Activated CD4-positive, alpha-beta T cell treated with anti-CD3 and anti-CD28 coated beads, Interleukin-2, amount 10 ng/mL, durations not matched to agents 24 days and 14 days (primary cell): ENCODE measurements at regions of chr20 and their contacts with region 1.

Region 1: DNA sequence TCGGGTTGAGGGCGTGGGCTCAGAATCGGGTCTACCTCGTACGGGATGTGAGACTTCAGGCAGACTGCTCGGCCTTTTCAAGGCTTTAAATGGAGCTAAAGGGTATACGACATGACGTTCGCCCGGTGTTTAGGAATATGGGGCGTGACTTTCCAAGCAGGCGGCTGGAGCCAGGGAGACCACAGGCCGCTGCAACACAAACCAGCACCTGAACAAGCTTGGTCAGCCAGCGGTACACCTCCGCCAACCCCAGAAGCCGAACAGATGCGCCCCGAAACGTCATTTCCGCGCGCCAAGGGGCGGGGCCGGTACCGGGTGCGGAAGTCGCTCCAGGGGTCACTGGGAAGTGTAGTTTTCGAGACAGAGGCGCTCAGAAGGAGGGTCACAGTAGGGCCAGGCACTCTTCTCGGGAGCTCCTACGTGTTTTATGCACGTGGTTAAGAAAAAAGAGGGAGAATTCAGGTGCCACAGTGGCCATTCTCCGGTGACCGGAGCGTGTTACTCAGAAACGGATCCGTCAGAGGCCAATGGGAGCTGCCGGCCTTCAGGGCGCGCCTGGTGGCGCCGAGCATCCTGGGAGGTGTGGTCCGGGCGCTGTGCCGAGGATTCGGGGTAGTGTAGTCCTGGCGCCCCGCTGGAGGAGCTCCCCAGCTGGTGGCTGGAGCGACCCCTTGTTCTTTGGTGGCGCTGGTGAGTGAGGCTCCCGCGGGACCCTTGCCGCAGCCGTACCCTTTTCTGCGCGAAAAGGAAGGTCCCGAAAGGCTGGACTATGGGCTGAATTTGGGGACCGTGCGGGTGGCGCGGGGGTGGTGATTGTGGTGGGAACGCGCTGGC is at the start of gene ZNF133:
- DNase-seq: peak; percentile 99
- H3K4me3 Mint-ChIP-seq: peak within 1 kb of the TSS; percentile 99
- H3K27ac Mint-ChIP-seq: peak within 1 kb of the TSS; percentile 99
- H3K4me1 Mint-ChIP-seq: peaks cover 22% of the 10 kb centered on the region
- H3K27me3 Mint-ChIP-seq: peaks cover 17% of the 10 kb centered on the region
- total RNA-seq, gene ZNF133: 10.2 and 10.5 TPM in 2 replicates

Region 2: DNA sequence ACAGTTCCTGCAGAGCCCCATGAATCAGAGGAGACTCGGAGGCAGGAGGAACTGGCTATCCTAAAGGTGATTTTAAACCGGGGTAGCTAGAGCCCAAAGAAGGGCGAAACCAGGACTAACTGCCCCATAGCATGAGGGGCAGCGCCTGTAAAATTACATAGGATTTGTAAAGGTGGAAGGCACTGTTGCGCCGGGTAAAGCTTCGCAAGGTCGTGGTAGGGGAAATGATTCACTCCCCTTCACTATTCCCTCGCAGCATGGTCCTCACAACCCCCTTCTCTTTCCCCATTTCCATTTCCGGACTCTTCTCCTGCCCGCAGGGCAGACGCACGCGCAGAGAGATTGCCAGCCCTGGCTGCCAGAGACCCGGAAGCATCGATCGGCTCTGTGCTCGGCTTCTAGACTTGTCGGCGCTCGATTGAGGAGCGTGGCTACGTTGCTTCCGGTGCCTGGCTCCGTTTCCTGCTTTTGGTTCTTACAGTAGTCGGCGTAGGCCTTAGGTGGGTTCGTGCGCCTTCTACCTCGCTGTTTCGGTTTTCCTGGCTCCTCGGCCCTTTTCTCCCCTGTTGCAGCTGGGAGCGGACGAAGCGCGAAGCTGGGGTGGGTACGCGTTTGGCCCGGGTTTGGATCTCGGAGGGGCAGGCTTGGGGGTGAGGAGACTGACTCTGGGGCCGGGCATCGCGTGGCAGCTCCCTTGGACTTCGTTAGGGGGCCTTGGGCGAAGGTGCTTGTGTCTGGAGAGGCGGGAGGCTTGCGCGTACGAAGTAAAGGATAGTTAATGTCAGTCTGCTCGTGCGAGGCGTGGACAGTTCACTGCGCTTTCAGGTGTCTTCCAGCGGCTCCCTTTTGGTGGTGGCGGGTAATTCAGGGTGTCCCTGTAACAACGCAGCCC is 1558.3 kb before region 1 on chr20 and contains the start of gene SNRPB2:
- intact Hi-C with region 1: loop called (anchors 2 kb)
- DNase-seq: peak; percentile 97
- H3K4me3 Mint-ChIP-seq: peak within 1 kb of the TSS; percentile 100
- H3K27ac Mint-ChIP-seq: peak within 1 kb of the TSS; percentile 100
- H3K4me1 Mint-ChIP-seq: peaks cover 49% of the 10 kb centered on the region
- H3K27me3 Mint-ChIP-seq: peaks cover 16% of the 10 kb centered on the region
- total RNA-seq, gene SNRPB2: 132 and 134 TPM in 2 replicates

Region 3: DNA sequence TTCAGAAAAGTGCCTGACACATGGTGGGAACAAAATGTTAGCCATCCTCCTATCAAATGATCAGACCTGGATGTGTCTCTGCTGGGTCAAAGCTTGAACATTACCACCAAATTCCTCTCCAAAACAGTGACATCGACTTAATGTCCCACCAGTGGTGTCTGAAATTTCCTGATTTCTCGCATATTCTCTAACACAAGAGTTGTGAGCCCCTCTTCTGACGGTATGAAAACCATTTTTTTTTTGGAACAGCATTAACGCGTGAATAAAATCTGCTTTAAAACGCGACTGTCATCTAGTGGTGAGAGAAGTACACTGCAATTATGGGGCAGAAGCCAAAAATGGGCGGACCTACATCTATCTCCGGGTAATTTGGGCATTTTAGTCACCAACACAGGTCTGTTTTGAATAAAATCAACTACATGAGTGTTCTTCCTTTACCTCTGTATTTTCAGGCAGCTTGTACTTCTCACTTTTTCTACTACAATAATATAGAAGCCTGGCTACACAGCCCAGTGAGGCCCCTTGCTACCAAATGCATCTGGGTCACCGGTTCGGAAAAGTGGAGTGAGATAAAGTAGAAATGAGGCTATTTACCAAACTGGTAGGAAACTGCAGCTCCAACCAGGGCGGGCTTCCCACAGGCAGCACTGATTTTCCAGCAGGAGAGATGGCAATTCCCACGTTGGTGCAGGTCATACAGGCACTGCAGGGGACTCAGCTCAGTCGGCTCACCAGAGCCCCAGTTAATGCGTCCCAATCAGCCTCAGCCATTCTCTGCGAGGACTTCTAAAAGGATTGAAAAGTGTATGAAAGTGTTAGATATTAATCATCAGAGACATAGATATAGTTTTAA is 291.9 kb before region 1 on chr20:
- intact Hi-C with region 1: loop called (anchors 5 kb)
- DNase-seq: peak; percentile 87
- H3K4me3 Mint-ChIP-seq: no peak overlapping the region
- H3K27ac Mint-ChIP-seq: no peak overlapping the region
- H3K4me1 Mint-ChIP-seq: peaks cover 38% of the 10 kb centered on the region
- H3K27me3 Mint-ChIP-seq: peaks cover 3% of the 10 kb centered on the region

Region 4: DNA sequence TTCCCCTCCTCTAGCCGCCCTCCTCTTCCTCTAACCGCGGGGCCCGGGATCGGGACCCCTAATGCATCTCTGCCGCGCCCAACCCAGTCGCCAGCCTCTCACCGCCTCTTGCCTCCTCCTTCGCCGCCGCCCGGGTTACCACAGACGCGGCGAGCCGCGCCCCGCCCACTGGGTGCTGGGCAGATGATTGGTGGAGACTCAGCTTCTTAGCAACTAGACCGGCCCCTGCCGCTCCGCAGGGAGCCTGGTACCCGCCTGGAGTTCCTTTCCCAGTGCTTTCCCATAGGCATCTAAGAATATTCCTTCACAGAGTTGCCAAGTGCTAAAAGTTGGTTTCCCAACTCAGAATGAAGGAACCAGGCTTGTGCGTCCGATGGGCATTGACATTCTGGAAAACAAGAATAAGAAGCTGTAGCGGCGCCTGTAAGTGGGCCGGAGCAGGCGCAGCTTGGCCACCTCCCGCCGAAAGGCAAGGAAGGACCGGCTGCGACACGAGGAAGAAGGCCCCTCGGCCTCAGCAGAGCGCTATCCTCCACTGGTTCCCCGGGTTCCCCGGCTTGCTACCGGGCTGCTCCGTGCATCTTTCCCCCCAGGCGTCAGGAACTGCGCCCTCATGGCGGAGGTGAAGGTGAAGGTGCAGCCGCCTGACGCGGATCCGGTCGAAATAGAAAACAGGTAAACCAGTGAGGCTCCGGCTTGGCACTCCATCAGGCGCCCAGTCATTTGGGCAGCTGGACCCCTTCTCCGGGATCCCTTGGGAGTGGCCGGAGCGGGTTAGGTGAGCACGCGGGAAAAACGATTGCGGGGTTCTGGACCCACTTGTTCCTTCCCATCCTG is 179.0 kb after region 1 on chr20 and contains the starts of genes DZANK1 and POLR3F:
- intact Hi-C with region 1: loop called (anchors 1 kb)
- DNase-seq: peak; percentile 98
- H3K4me3 Mint-ChIP-seq: peak within 1 kb of the TSS; percentile 92
- H3K27ac Mint-ChIP-seq: peak within 1 kb of the TSS; percentile 89
- H3K4me1 Mint-ChIP-seq: peaks cover 20% of the 10 kb centered on the region
- H3K27me3 Mint-ChIP-seq: no peaks in the 10 kb centered on the region
- total RNA-seq, gene DZANK1: 1.8 and 1.9 TPM in 2 replicates
- total RNA-seq, gene POLR3F: 15.0 and 15.3 TPM in 2 replicates

Region 5: GRCh38 chr20:18566892-18567742 is 279.0 kb after region 1 on chr20 and contains the start of gene SMIM26:
- intact Hi-C with region 1: loop called (anchors 1 kb)
- DNase-seq: peak; percentile 98
- H3K4me3 Mint-ChIP-seq: peak within 1 kb of the TSS; percentile 97
- H3K27ac Mint-ChIP-seq: peak within 1 kb of the TSS; percentile 96
- H3K4me1 Mint-ChIP-seq: peaks cover 14% of the 10 kb centered on the region
- H3K27me3 Mint-ChIP-seq: no peaks in the 10 kb centered on the region
- total RNA-seq, gene SMIM26: 55.8 and 60.2 TPM in 2 replicates

Region 6: GRCh38 chr20:18793625-18794427 is 505.7 kb after region 1 on chr20:
- intact Hi-C with region 1: loop called (anchors 5 kb)
- DNase-seq: peak; percentile 95
- H3K4me3 Mint-ChIP-seq: peak overlapping the region; percentile 93
- H3K27ac Mint-ChIP-seq: peak overlapping the region; percentile 92
- H3K4me1 Mint-ChIP-seq: peaks cover 6% of the 10 kb centered on the region
- H3K27me3 Mint-ChIP-seq: peaks cover 6% of the 10 kb centered on the region

Region 7: DNA sequence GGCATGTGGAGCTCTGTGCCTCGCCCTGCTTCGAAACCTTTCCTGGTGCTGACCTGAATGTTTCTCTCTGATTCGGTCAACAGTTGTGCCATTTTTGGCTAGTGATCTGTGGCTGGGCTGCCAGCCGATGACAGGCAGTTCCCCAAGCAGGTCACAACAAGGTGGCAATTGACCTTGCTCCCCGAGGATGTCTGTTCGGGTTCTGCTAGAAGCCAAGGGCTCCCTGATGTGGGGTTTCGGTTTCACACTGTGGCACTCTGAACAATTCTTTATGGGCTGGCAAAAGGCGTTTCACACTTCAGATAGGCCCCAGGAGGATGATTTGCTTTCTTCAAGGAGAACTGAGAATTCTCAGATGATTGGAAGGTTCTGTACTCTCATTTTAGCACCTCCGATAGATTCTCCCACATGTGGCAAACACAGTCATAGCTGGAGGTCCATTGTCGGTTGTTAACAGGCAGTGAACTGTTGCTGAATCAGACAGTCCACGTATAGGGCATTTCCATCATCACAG is 1059.9 kb after region 1 on chr20:
- intact Hi-C with region 1: no loop called
- DNase-seq: no peak
- H3K4me3 Mint-ChIP-seq: no peak overlapping the region
- H3K27ac Mint-ChIP-seq: no peak overlapping the region
- H3K4me1 Mint-ChIP-seq: no peaks in the 10 kb centered on the region
- H3K27me3 Mint-ChIP-seq: no peaks in the 10 kb centered on the region